Activated B cell treated with CpG ODN at 0.5 μM for 24 hours (primary cell): ENCODE measurements at regions of chr11 and their contacts with region 1.

Region 1: GRCh38 chr11:109946322-109946846 is 146.8 kb upstream of the ZC3H12C start:
- DNase-seq: peak; percentile 32
- ATAC-seq: peak; percentile 92
- H3K4me3 Mint-ChIP-seq: peak overlapping the region; percentile 68
- H3K27ac Mint-ChIP-seq: no peak overlapping the region
- H3K4me1 Mint-ChIP-seq: peaks cover 13% of the 10 kb centered on the region
- H3K27me3 Mint-ChIP-seq: peaks cover 14% of the 10 kb centered on the region
- CTCF ChIP-seq: no peak

Region 2: DNA sequence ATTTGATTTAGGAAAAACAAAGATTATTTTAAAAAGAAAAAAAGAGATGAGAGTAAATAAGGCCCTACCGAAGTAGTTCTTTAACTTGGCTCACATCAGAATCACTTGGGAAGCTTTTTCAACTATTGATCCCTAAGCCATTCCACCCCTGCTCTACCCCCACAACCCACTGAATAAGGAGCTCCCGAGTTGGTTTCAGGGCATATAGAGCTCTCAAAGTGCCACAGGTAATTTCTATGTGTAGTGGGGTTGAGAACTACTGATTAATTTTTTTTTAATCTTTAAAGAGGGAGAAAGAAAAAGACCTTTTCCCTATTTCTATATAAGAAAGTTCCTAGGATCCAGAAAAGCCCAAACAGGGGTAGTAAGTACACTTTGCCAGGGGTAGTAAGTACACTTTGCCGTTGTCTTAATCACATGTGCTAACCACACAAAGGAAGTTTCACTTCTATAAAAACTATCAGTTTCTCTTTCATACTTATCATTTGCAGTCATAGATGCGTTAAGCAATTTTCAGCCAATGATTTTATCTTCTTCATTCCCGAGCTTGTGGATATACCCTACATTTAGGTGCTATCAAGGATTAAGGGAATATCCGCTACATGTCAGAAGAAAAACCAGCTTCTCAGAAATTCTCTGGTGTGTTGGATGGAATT is 38.4 kb after region 1 on chr11:
- CTCF ChIA-PET with region 1: no interaction called
- POLR2A ChIA-PET with region 1: no interaction called
- intact Hi-C with region 1: loop called (anchors 5 kb)
- DNase-seq: no peak
- ATAC-seq: peak; percentile 94
- H3K4me3 Mint-ChIP-seq: peak overlapping the region; percentile 17
- H3K27ac Mint-ChIP-seq: peak overlapping the region; percentile 55
- H3K4me1 Mint-ChIP-seq: peaks cover 19% of the 10 kb centered on the region
- H3K27me3 Mint-ChIP-seq: peaks cover 3% of the 10 kb centered on the region
- CTCF ChIP-seq: no peak

Region 3: DNA sequence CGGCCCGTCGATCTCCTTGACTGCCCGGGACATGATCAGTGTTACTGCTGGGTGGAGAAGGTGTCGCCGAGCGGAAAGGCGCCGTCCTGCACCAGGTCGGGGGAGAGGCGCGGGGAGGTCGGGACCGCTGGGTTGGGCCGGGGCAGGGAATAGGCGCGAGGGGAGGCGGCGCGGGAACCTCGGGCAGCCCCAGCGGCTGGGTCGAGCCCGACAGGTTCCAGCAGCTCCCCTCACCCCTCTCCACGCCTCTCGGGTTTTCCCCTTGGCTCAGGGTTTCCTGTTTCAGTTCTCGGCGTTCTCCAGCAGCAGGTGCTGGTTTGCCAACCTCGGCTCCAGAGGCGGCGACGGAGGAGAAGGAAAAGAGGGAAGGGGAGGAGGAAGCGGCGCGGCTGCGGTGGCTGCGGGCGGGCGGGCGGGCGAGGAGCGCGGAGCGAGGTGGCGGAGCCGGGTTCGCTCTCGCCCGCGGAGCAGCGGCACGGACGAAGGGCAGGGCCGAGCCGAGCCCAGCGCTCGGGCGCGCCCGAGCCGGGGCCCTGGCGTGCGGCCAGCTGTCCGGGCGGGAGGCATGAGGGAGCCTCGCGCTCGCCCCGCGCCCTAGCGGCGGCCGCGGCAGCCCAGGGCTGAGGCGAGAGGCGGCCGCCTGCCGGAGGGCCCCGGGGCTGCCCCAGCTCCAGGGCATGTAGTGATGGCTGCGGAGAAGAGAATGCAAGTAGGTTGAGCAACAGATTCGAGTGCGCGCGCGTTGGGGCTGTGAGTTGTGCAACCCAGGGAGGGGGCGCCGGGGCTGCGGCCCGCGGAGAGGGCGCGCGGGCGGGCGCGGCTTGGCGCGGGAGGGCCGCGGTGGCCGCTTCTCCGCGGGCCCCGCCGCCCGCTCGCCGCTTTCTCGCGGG is 146.4 kb after region 1 on chr11 and contains the start of gene ZC3H12C:
- CTCF ChIA-PET with region 1: interaction called, 8 read pairs
- POLR2A ChIA-PET with region 1: no interaction called
- intact Hi-C with region 1: loop called (anchors 1 kb)
- DNase-seq: peak; percentile 40
- ATAC-seq: peak; percentile 79
- H3K4me3 Mint-ChIP-seq: peak within 1 kb of the TSS; percentile 88
- H3K27ac Mint-ChIP-seq: peak within 1 kb of the TSS; percentile 33
- H3K4me1 Mint-ChIP-seq: peaks cover 12% of the 10 kb centered on the region
- H3K27me3 Mint-ChIP-seq: peaks cover 43% of the 10 kb centered on the region
- CTCF ChIP-seq: no peak
- total RNA-seq, gene ZC3H12C: 0.83 and 0.95 TPM in 2 replicates

Region 4: GRCh38 chr11:110195845-110196754 is 249.7 kb after region 1 on chr11:
- CTCF ChIA-PET with region 1: interaction called, 7 read pairs
- POLR2A ChIA-PET with region 1: no interaction called
- intact Hi-C with region 1: loop called (anchors 1 kb)
- DNase-seq: no peak
- ATAC-seq: no peak
- H3K4me3 Mint-ChIP-seq: no peak overlapping the region
- H3K27ac Mint-ChIP-seq: no peak overlapping the region
- H3K4me1 Mint-ChIP-seq: peaks cover 11% of the 10 kb centered on the region
- H3K27me3 Mint-ChIP-seq: peaks cover 23% of the 10 kb centered on the region
- CTCF ChIP-seq: no peak

Region 5: DNA sequence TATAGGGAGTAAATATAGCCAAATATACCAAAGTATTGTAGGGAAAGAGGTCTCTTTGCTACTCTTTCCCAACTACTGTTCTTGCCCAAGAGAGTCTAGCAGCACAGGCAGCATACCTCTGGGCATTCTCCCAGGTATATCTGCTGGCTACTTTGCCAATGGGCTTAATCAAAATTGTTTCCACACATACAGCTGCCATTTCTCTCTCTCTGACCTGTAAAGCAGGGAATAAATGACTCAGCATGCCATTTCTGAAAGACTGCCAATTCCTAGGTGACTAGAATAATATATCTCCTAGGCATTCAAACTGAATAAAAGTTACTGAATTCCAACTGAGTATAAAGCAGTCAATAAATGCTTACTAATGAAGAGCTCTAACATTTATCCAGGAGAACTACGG is 305.5 kb after region 1 on chr11:
- CTCF ChIA-PET with region 1: interaction called, 4 read pairs
- POLR2A ChIA-PET with region 1: no interaction called
- intact Hi-C with region 1: loop called (anchors 1 kb)
- DNase-seq: no peak
- ATAC-seq: no peak
- H3K4me3 Mint-ChIP-seq: no peak overlapping the region
- H3K27ac Mint-ChIP-seq: no peak overlapping the region
- H3K4me1 Mint-ChIP-seq: no peaks in the 10 kb centered on the region
- H3K27me3 Mint-ChIP-seq: no peaks in the 10 kb centered on the region
- CTCF ChIP-seq: no peak

Region 6: DNA sequence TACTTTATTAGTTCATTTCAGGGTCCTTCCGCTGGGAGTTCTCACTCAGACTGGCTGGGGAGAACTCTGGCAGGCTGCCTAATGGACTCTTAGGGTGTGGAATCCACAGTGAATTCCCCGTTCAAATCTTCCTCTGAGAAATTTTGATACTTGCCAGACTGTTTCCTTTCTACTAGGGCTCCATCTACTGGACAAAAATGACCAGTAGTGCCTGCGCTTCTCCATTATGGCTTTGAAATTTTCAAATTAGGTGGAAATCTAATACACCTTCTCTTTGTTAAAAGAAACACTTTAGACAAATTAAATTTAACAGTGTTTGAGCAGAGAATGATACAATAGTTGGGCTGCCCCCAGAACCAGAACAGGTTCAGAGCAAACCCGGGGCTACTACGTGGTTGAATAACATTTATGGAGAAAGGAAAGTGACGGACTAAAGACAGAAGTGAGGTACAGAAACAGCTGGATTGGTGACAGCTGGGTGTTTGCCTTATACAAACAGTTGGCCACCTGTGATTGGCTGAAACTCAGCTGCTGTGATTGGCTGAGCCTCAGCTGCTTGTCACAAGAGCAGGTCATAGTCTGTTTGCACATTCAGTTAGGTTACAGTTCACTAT is 430.4 kb after region 1 on chr11:
- CTCF ChIA-PET with region 1: no interaction called
- POLR2A ChIA-PET with region 1: no interaction called
- intact Hi-C with region 1: loop called (anchors 1 kb)
- DNase-seq: no peak
- ATAC-seq: peak; percentile 58
- H3K4me3 Mint-ChIP-seq: peak overlapping the region; percentile 13
- H3K27ac Mint-ChIP-seq: no peak overlapping the region
- H3K4me1 Mint-ChIP-seq: peaks cover 5% of the 10 kb centered on the region
- H3K27me3 Mint-ChIP-seq: no peaks in the 10 kb centered on the region
- CTCF ChIP-seq: no peak